PC-3 (cell line): ENCODE measurements at regions of chr2 and their contacts with region 1.

Region 1: DNA sequence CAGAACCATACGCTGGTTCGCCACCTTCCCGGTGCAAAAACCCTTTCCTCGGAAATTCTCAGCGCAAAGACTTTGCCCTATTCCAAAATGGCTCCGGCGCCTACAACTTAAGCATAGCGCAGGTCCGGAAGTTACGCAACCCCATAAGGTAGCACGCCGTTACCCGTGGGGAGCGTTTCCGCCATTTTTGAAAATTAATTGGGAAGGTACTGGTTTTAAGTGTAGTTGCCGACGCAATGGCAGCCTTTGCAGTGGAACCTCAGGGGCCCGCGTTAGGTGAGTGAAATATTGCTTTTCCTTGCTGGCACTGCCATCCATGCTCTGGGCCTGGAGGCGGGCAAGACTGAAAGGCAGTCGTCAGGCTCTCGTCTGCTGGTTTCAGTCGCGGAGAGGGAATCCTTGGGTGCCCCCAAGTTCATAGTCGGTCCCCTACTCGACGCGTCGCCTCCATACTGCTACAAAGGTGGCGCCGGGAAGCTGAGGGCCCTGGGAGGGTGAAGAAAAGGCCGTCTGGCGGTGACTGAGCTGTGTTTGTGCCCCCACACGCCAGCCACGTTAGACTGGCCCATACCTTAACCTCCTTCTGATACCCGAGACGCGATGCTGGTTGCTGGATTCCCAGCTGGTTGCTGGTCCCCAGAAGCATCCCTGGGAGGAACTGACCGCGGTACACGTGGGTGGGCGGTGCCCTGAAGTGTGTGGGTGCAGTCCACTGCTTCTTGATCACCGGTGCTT is at the start of gene NUP35:
- DNase-seq: peak; percentile 97
- ATAC-seq: peak; percentile 85
- H3K4me3 ChIP-seq: peak within 1 kb of the TSS; percentile 85
- H3K27ac ChIP-seq: peak within 1 kb of the TSS; percentile 92
- H3K4me1 ChIP-seq: peaks cover 15% of the 10 kb centered on the region
- H3K27me3 ChIP-seq: no peaks in the 10 kb centered on the region
- CTCF ChIP-seq: no peak
- total RNA-seq, gene NUP35: 25.0 and 26.0 TPM in 2 replicates

Region 2: GRCh38 chr2:183000846-183001245 is 123.5 kb before region 1 on chr2:
- CTCF ChIA-PET with region 1: no interaction called
- POLR2A ChIA-PET with region 1: no interaction called
- intact Hi-C with region 1: no loop called
- DNase-seq: no peak
- ATAC-seq: no peak
- H3K4me3 ChIP-seq: no peak overlapping the region
- H3K27ac ChIP-seq: no peak overlapping the region
- H3K4me1 ChIP-seq: no peaks in the 10 kb centered on the region
- H3K27me3 ChIP-seq: no peaks in the 10 kb centered on the region
- CTCF ChIP-seq: no peak

Region 3: GRCh38 chr2:183026424-183026823 is 98.0 kb before region 1 on chr2:
- CTCF ChIA-PET with region 1: no interaction called
- POLR2A ChIA-PET with region 1: interaction called, 12 read pairs
- intact Hi-C with region 1: no loop called
- DNase-seq: no peak
- ATAC-seq: no peak
- H3K4me3 ChIP-seq: no peak overlapping the region
- H3K27ac ChIP-seq: no peak overlapping the region
- H3K4me1 ChIP-seq: no peaks in the 10 kb centered on the region
- H3K27me3 ChIP-seq: no peaks in the 10 kb centered on the region
- CTCF ChIP-seq: no peak

Region 4: GRCh38 chr2:183078465-183079138 is 45.8 kb before region 1 on chr2 and contains the start of gene DUSP19:
- CTCF ChIA-PET with region 1: no interaction called
- POLR2A ChIA-PET with region 1: no interaction called
- intact Hi-C with region 1: loop called (anchors 1 kb)
- DNase-seq: peak; percentile 99
- ATAC-seq: peak; percentile 94
- H3K4me3 ChIP-seq: peak within 1 kb of the TSS; percentile 80
- H3K27ac ChIP-seq: 0 out of 2 replicates have a peak within 1 kb of the TSS, but pooled peaks have one; percentile 12
- H3K4me1 ChIP-seq: peaks cover 13% of the 10 kb centered on the region
- H3K27me3 ChIP-seq: no peaks in the 10 kb centered on the region
- CTCF ChIP-seq: no peak
- total RNA-seq, gene DUSP19: 0.51 and 0.58 TPM in 2 replicates

Region 5: GRCh38 chr2:183093857-183094657 is 30.3 kb before region 1 on chr2:
- CTCF ChIA-PET with region 1: no interaction called
- POLR2A ChIA-PET with region 1: no interaction called
- intact Hi-C with region 1: loop called (anchors 1 kb)
- DNase-seq: peak; percentile 52
- ATAC-seq: peak; percentile 78
- H3K4me3 ChIP-seq: no peak overlapping the region; the same call in 1 of the 2 replicates
- H3K27ac ChIP-seq: no peak overlapping the region
- H3K4me1 ChIP-seq: peaks cover 11% of the 10 kb centered on the region
- H3K27me3 ChIP-seq: no peaks in the 10 kb centered on the region
- CTCF ChIP-seq: peak; percentile 55